Caco-2 (cell line): ENCODE measurements at regions of chr2 and their contacts with region 1.

Region 1: DNA sequence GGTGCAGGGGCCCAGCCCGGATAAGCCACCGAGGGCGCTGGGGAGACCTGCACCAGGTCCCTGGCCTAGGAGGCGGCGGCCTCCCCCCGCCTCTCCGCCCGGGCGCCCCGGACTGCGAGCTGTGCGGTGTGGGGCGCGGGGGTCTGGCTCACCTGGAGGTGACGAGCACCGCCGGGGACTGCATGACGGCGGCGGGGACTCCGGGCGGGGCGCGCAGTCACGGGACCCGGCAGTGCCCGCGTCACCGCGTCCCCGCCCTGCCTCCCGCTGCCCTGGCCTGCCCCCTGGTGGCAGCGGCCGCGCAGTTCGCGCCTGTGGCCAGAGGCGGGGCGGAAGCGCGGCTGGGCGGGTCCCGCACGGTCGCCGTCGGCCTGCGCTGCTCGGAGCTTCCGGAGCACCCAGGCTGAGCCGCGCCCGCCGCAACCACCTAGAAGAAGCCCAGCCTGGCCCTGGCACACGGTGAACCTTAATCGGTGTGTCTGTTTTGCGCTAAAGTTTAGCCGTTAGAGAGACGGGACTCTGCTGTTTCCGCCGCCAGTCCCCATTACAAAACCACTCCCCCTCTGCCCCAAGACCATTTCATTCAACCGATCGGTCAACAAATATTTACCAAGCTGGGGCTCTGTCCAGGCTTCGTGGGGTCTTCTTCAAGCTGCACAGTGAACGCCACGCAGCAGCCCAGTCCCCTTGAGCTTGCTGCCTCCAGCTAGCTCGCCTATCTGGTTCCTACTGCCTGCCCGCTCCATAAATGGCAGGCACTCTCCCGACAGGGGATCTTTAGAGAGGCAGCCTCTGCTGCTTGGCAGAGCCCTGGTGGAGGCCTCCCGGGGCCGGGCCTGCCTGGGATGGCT is at the start of gene HS1BP3:
- DNase-seq: peak; percentile 80 to 96
- H3K4me3 ChIP-seq: peak within 1 kb of the TSS; percentile 92
- H3K4me3 Mint-ChIP-seq: peak within 1 kb of the TSS; percentile 81
- H3K27ac Mint-ChIP-seq: peak within 1 kb of the TSS; percentile 81
- H3K4me1 ChIP-seq: peaks cover 13% of the 10 kb centered on the region
- H3K4me1 Mint-ChIP-seq: peaks cover 7% of the 10 kb centered on the region
- H3K27me3 ChIP-seq: no peaks in the 10 kb centered on the region
- H3K27me3 Mint-ChIP-seq: no peaks in the 10 kb centered on the region
- CTCF ChIP-seq: peak; percentile 55 to 95
- total RNA-seq, gene HS1BP3: 26.5 and 31.1 TPM in 2 replicates

Region 2: DNA sequence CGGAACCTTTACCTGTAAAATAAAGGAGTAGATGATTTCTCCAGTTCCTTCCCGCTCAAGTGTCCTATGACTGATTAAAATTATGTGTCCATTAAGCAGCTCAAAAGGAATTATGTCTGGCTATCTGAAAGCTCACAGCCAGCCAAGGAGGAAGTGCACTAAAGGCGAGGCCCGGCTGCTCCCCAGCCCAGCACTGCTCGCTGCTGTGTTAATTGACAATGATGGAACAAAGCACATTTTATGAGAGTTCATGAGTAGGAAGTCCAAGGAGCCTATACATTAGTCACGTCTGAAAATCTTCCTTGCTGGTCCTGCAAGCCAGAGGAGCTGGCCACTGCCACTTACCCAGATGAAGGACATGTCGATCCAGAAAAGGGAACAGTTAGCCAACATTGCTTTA is 763.6 kb before region 1 on chr2:
- CTCF ChIA-PET with region 1: no interaction called
- POLR2A ChIA-PET with region 1: no interaction called
- intact Hi-C with region 1: no loop called
- DNase-seq: no peak
- H3K4me3 ChIP-seq: no peak overlapping the region
- H3K4me3 Mint-ChIP-seq: no peak overlapping the region
- H3K27ac Mint-ChIP-seq: no peak overlapping the region
- H3K4me1 ChIP-seq: no peaks in the 10 kb centered on the region
- H3K4me1 Mint-ChIP-seq: no peaks in the 10 kb centered on the region
- H3K27me3 ChIP-seq: no peaks in the 10 kb centered on the region
- H3K27me3 Mint-ChIP-seq: no peaks in the 10 kb centered on the region
- CTCF ChIP-seq: no peak

Region 3: DNA sequence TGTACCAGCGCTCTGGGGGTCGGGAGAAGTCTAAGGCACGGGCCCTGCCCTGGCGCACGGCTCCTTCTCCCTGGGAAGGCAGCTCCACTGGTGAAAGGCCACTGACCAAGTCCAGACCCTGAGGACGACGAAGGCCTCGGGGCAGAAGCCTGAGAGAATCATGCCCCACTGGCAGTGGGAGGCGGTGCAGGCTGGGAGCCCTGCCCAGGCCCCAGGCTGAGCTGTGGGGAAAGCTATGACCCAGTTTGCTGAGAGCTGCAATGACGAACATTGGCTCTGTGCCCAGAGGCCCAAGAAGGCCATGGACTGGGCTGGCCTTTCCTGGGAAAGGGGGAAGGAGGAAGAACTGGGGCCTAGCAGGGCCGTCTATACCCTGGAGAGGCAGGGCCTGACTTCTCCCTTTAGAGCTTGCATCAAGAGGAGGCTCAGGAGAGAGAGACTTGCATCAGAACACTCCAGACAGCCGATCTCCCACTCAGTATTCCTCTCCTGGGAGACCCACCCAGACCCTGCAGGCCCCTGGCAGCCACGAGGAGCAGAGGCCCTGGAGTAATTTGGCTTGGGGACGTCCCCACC is 33.1 kb before region 1 on chr2:
- CTCF ChIA-PET with region 1: no interaction called
- POLR2A ChIA-PET with region 1: no interaction called
- intact Hi-C with region 1: no loop called
- DNase-seq: peak; percentile 31 to 34
- H3K4me3 ChIP-seq: no peak overlapping the region
- H3K4me3 Mint-ChIP-seq: no peak overlapping the region
- H3K27ac Mint-ChIP-seq: no peak overlapping the region
- H3K4me1 ChIP-seq: no peaks in the 10 kb centered on the region; the same call in 1 of the 2 replicates
- H3K4me1 Mint-ChIP-seq: no peaks in the 10 kb centered on the region
- H3K27me3 ChIP-seq: no peaks in the 10 kb centered on the region
- H3K27me3 Mint-ChIP-seq: no peaks in the 10 kb centered on the region
- CTCF ChIP-seq: peak in 1 of 2 experiments; percentile 16

Region 4: DNA sequence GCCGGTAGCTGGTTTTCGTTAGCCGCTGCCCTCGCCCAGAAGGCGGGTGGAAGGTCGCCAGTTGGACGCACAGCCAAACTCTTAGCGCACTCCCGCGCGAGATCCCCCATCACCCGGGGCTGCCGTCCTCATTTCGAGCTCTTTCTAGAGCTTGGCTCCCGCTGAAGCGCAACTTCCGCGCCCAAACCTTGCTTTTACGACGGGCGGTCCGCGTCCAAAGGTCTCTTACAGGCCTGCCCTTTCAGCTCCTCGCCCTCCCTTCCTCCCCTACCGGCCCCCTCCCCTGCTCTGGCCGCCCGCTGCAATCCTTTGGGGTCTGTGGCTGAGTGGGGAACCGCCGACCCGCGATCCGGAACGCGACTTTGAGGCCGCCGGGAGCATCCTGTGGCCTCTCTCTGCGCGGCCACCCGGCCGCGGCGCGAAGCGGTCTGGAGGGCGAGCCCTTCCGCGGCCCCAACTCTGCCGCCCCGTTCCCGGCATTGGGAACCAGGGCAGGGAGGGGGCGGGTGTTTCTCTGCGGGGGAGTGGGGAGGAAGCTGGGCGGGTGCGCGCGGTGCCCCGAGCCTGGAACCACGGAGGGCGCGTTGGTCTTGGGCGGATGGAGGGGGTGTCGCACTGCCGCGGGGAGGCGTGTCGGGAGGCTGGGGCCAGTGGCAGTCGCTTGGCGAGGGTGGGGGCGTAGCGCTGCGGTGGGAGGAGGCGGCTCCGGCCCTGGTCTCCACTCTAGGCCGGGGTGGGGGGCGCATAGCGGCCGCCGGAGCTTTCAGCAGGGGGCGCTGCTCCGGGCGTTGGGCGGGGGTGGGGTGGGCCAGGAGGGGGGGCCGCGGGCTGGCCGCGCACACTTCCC is 15.4 kb after region 1 on chr2 and contains the start of gene GDF7:
- CTCF ChIA-PET with region 1: interaction called, 28 read pairs
- POLR2A ChIA-PET with region 1: interaction called, 3 read pairs
- intact Hi-C with region 1: no loop called
- DNase-seq: peak in 1 of 2 experiments; percentile 78
- H3K4me3 ChIP-seq: peak within 1 kb of the TSS; percentile 54
- H3K4me3 Mint-ChIP-seq: peak within 1 kb of the TSS; percentile 70
- H3K27ac Mint-ChIP-seq: no peak within 1 kb of the TSS
- H3K4me1 ChIP-seq: peaks cover 15% of the 10 kb centered on the region; the same call in 1 of the 2 replicates
- H3K4me1 Mint-ChIP-seq: no peaks in the 10 kb centered on the region
- H3K27me3 ChIP-seq: no peaks in the 10 kb centered on the region; the same call in 1 of the 2 replicates
- H3K27me3 Mint-ChIP-seq: peaks cover 4% of the 10 kb centered on the region
- CTCF ChIP-seq: peak in 1 of 2 experiments; percentile 48
- total RNA-seq, gene GDF7: 1.7 and 1.8 TPM in 2 replicates